Naive thymus-derived CD4-positive, alpha-beta T cell (primary cell): ENCODE measurements at regions of chr16 and their contacts with region 1.

Region 1: DNA sequence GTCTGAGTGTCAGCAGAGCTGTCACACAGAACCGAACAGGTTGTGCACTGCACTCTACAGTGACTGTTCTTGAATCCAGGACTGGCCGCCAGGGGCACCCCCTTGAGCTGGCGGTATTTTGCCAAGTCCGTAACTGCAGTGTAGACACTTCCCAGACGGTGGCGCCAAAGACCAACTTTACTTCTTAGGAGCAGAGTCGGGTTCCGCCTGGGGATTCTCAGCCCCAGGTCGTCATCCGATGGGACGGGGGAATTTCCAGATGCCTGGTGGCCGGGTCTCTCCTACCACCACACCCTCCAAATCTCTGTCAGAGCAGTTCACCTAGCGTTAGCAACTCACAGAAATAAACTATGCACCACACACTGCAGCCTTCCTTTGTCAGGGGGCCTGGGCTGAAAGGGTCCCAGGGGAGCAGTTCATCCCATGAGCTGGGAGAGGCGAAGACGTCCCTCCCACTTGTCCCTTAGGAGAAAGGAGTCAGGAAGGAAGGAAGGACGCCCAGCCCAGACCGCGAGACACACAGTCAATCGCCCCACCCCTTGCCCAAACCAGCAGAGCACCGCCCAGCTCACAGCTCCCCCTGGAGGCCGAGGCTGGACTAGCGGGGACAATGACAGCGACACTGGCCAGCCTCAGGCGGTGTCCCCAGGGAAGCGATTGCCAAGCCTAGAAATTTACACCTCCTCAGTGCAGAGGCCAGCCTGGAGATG is 7.4 kb upstream of the RIPOR1 start:
- DNase-seq: peak; percentile 88 to 97 (median 93)
- ATAC-seq: peak; percentile 94
- H3K4me3 ChIP-seq: peak overlapping the region; percentile 92
- H3K4me3 Mint-ChIP-seq: peak overlapping the region; percentile 86 to 94 (median 92)
- H3K27ac ChIP-seq: peak overlapping the region; percentile 87
- H3K27ac Mint-ChIP-seq: peak overlapping the region; percentile 91 to 99 (median 96)
- H3K4me1 ChIP-seq: peaks cover 6 to 9% of the 10 kb centered on the region in 2 donors
- H3K4me1 Mint-ChIP-seq: peaks cover 14 to 35% (median 23%) of the 10 kb centered on the region in 7 donors
- H3K27me3 ChIP-seq: no peaks in the 10 kb centered on the region
- H3K27me3 Mint-ChIP-seq: peaks cover 0 to 28% (median 0%) of the 10 kb centered on the region in 5 donors

Region 2: GRCh38 chr16:67504041-67505021 is 16.9 kb before region 1 on chr16:
- CTCF ChIA-PET with region 1: interaction called, 12 read pairs
- POLR2A ChIA-PET with region 1: interaction called, 3 read pairs
- intact Hi-C with region 1: no loop called
- DNase-seq: peak in 6 of 9 donors; percentile 31 to 51 (median 46)
- ATAC-seq: peak; percentile 97
- H3K4me3 ChIP-seq: peak overlapping the region; percentile 6
- H3K4me3 Mint-ChIP-seq: peak overlapping the region; percentile 47 to 82 (median 68)
- H3K27ac ChIP-seq: peak overlapping the region; percentile 56
- H3K27ac Mint-ChIP-seq: peak overlapping the region; percentile 80 to 99 (median 92)
- H3K4me1 ChIP-seq: peaks cover 33 to 42% of the 10 kb centered on the region in 2 donors
- H3K4me1 Mint-ChIP-seq: peaks cover 37 to 64% (median 50%) of the 10 kb centered on the region in 7 donors
- H3K27me3 ChIP-seq: no peaks in the 10 kb centered on the region
- H3K27me3 Mint-ChIP-seq: no peaks in the 10 kb centered on the region

Region 3: DNA sequence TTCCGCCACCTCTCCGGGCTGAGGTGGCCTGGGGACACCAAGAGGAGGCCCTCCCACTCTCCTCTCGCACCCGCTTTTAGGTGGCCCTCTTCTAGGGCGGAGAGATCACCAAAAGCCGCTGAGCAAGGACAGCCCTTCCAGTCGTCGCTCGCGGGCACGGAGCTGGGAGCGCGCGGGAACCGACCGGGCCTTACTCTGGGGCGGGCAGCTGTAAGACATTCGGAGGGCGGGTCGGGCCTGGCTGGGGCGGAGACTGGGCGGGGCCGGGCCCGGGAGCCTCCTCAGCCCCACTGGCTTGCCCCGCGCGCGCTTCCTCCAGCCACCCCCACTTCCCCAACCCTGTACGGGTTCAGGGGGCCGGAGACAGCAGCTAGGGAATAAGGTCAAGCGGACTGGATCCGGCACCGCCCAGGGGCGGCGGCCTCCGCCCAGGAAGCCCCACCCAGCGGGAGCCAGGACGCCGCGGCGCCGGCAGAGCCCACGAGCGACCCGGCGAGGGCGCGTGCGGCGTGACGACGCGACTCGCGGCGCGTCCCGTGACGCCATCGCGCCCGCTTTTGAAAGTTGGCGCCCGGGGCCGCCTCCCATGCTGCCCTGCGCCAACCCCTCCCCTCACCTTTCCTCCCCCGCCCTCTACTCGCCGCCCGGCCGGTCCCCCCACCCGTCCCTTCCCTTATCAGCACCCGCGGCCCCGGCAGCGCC is 40.7 kb after region 1 on chr16:
- CTCF ChIA-PET with region 1: interaction called, 23 read pairs
- POLR2A ChIA-PET with region 1: interaction called, 23 read pairs
- intact Hi-C with region 1: loop called (anchors 1 kb)
- DNase-seq: peak; percentile 93 to 98 (median 96)
- ATAC-seq: peak; percentile 86
- H3K4me3 ChIP-seq: peak overlapping the region; percentile 72
- H3K4me3 Mint-ChIP-seq: peak overlapping the region; percentile 85 to 93 (median 90)
- H3K27ac ChIP-seq: peak overlapping the region; percentile 98
- H3K27ac Mint-ChIP-seq: peak overlapping the region; percentile 90 to 99 (median 96)
- H3K4me1 ChIP-seq: peaks cover 30 to 36% of the 10 kb centered on the region in 2 donors
- H3K4me1 Mint-ChIP-seq: peaks cover 28 to 64% (median 46%) of the 10 kb centered on the region in 7 donors
- H3K27me3 ChIP-seq: no peaks in the 10 kb centered on the region
- H3K27me3 Mint-ChIP-seq: no peaks in the 10 kb centered on the region

Region 4: GRCh38 chr16:67719048-67719777 is 198.0 kb after region 1 on chr16 and contains the start of gene GFOD2:
- CTCF ChIA-PET with region 1: no interaction called
- POLR2A ChIA-PET with region 1: no interaction called
- intact Hi-C with region 1: loop called in 1 of 2 experiments (anchors 5 kb)
- DNase-seq: peak; percentile 94 to 100 (median 96)
- ATAC-seq: peak; percentile 96
- H3K4me3 ChIP-seq: peak within 1 kb of the TSS; percentile 95
- H3K4me3 Mint-ChIP-seq: peak within 1 kb of the TSS; percentile 90 to 99 (median 94)
- H3K27ac ChIP-seq: peak within 1 kb of the TSS; percentile 88
- H3K27ac Mint-ChIP-seq: peak within 1 kb of the TSS; percentile 91 to 99 (median 98)
- H3K4me1 ChIP-seq: peaks cover 15 to 16% of the 10 kb centered on the region in 2 donors
- H3K4me1 Mint-ChIP-seq: peaks cover 19 to 51% (median 39%) of the 10 kb centered on the region in 7 donors
- H3K27me3 ChIP-seq: no peaks in the 10 kb centered on the region
- H3K27me3 Mint-ChIP-seq: no peaks in the 10 kb centered on the region
- total RNA-seq, gene GFOD2: 6.3 to 13.4 (median 11.4) TPM

Region 5: DNA sequence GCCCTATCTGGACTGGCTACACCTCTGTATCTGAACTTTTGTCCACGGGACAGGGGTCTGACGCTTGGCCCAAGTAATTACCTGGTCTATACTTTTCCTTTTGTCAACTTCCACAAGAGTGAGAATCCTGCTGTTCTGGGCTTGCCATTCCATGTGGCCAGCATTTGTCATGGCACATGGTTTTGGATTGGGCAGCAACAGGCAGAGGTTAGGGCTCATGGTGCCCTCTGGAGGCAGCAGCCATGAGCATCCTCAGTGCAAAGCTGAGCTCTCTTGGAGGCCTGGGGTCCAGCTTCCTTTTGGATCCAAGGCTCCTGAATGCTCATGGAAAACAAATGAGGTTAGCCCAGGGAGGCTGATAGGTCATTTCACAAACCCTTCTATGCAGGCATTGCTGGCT is 344.1 kb after region 1 on chr16:
- CTCF ChIA-PET with region 1: interaction called, 5 read pairs
- POLR2A ChIA-PET with region 1: no interaction called
- intact Hi-C with region 1: loop called in 1 of 2 experiments (anchors 1 kb)
- DNase-seq: peak in 2 of 9 donors; percentile 18 to 19
- ATAC-seq: peak; percentile 64
- H3K4me3 ChIP-seq: no peak overlapping the region
- H3K4me3 Mint-ChIP-seq: no peak overlapping the region
- H3K27ac ChIP-seq: no peak overlapping the region
- H3K27ac Mint-ChIP-seq: peak overlapping the region in 1 of 9 donors; percentile 65
- H3K4me1 ChIP-seq: no peaks in the 10 kb centered on the region
- H3K4me1 Mint-ChIP-seq: peaks cover 4 to 16% (median 8%) of the 10 kb centered on the region in 7 donors
- H3K27me3 ChIP-seq: no peaks in the 10 kb centered on the region
- H3K27me3 Mint-ChIP-seq: no peaks in the 10 kb centered on the region

Region 6: DNA sequence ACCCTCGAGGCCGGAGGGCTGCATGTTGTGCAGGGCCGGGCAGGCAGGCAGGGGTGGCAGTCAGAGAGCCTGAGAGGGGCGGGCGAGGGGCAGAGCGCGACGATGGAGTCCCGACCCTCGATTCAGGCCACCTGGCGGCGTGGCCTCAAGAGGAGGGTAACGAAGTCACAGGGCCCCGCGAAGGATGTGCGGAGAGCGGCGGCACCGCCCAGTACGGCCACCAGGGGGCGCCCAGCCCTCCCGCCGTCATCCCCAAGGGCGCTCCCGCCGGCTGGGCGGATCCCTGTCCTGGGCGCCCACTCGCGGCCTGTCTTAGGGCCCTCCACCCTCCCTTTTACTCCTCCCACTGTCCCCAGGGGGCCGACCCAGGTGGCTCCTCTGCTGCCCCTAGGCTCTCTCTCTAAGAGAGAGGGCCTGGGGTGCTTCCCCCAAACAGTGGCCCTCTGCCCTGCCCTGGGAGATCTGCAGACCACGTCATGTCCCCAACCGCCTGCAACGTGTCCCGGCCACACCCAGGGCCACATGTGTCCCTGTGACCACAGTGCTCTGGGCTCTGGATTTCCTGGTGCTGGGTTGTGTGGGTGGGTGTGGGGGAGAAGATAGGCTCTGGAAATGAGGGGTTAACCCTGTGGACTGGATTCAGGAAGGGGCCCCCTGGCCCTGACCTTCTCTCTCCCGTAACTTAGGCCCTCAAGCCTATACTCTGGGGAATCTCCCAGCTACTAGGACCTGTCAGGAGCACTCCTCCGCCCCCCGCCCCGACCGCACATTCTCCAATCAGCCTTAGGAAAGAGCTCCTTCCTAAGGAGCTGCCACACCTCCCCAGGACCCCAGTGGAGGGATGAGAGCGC is 472.2 kb after region 1 on chr16:
- CTCF ChIA-PET with region 1: interaction called, 3 read pairs
- POLR2A ChIA-PET with region 1: no interaction called
- intact Hi-C with region 1: loop called in 1 of 2 experiments (anchors 1 kb)
- DNase-seq: peak; percentile 74 to 90 (median 83)
- ATAC-seq: peak; percentile 93
- H3K4me3 ChIP-seq: peak overlapping the region; percentile 65
- H3K4me3 Mint-ChIP-seq: peak overlapping the region; percentile 83 to 94 (median 92)
- H3K27ac ChIP-seq: peak overlapping the region; percentile 87
- H3K27ac Mint-ChIP-seq: peak overlapping the region; percentile 93 to 99 (median 97)
- H3K4me1 ChIP-seq: peaks cover 8 to 25% of the 10 kb centered on the region in 2 donors
- H3K4me1 Mint-ChIP-seq: peaks cover 10 to 48% (median 35%) of the 10 kb centered on the region in 7 donors
- H3K27me3 ChIP-seq: no peaks in the 10 kb centered on the region
- H3K27me3 Mint-ChIP-seq: no peaks in the 10 kb centered on the region